AG04449 (cell line): ENCODE measurements at regions of chr10 and their contacts with region 1.

Region 1: GRCh38 chr10:2927958-2928840 is 139.1 kb upstream of the PFKP start:
- DNase-seq: peak; percentile 1
- H3K4me3 ChIP-seq: no peak overlapping the region
- CTCF ChIP-seq: peak; percentile 76

Region 2: DNA sequence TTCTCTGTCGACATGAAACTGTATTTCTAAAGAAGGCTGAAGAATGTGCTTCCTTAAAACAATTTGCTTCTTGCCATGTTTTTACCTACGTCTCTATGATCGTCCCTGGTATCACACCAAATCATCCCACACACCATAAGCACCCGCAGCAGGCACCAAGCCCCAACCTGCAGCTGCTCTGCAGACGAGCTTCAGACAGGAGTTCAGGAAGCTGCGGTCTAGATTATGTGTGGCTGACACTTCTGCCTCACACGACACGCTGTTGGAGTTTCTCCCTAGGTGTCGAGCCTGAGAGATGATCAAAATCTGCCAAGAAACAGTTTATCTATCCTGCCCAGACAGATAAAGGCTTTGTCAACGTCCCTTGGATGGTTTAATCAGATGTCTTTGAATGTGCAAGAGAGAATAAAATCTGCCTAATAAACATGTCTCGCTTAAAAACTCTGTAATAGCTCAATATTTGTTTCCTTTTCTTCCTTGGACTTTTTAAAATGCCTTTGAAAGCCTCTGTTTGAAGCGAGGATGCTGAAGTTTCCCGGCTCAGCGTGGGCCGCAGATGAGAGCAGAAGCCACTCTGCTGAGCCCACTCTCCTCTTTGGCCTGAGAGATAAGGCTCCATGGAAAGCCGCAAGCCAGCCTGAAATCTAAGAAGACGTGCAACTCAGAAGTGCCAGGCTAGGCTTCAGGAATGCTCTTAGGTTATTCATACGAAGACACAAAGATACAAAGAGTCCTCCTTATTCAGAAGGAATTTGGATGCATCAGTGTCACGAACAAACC is 19.2 kb before region 1 on chr10:
- CTCF ChIA-PET with region 1: no interaction called
- POLR2A ChIA-PET with region 1: no interaction called
- DNase-seq: no peak
- H3K4me3 ChIP-seq: no peak overlapping the region
- CTCF ChIP-seq: no peak

Region 3: GRCh38 chr10:2938869-2939268 is 10.7 kb after region 1 on chr10:
- CTCF ChIA-PET with region 1: interaction called, 17 read pairs
- POLR2A ChIA-PET with region 1: no interaction called
- DNase-seq: no peak
- H3K4me3 ChIP-seq: no peak overlapping the region
- CTCF ChIP-seq: no peak

Region 4: GRCh38 chr10:2951235-2951835 is 23.1 kb after region 1 on chr10:
- CTCF ChIA-PET with region 1: interaction called, 16 read pairs
- POLR2A ChIA-PET with region 1: no interaction called
- DNase-seq: no peak
- H3K4me3 ChIP-seq: no peak overlapping the region
- CTCF ChIP-seq: no peak

Region 5: DNA sequence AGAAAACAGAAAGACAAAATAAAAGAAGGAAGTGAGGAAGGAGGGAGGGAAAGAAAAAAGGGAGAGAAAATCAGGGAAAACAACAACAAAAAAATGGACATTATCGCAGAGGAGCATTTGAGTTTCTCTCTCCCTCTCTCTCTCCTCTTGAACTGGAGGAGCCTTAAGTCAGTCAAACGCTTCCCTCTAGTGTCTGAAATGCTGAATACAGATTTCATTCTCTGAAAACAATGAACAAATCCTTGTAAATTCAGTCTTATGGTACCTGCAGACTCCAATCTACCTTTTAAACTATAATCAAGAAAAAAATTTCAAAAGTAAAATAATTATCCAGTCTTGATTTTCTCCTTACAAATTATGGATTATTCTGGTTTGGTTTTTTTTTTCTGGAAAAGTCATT is 49.9 kb after region 1 on chr10:
- CTCF ChIA-PET with region 1: interaction called, 37 read pairs
- POLR2A ChIA-PET with region 1: no interaction called
- DNase-seq: no peak
- H3K4me3 ChIP-seq: no peak overlapping the region
- CTCF ChIP-seq: peak; percentile 47

Region 6: GRCh38 chr10:2992401-2993198 is 64.4 kb after region 1 on chr10:
- CTCF ChIA-PET with region 1: interaction called, 10 read pairs
- POLR2A ChIA-PET with region 1: no interaction called
- DNase-seq: no peak
- H3K4me3 ChIP-seq: no peak overlapping the region
- CTCF ChIP-seq: no peak